ENCODE measurements at regions of chr9 and their contacts with region 1.

Region 1: DNA sequence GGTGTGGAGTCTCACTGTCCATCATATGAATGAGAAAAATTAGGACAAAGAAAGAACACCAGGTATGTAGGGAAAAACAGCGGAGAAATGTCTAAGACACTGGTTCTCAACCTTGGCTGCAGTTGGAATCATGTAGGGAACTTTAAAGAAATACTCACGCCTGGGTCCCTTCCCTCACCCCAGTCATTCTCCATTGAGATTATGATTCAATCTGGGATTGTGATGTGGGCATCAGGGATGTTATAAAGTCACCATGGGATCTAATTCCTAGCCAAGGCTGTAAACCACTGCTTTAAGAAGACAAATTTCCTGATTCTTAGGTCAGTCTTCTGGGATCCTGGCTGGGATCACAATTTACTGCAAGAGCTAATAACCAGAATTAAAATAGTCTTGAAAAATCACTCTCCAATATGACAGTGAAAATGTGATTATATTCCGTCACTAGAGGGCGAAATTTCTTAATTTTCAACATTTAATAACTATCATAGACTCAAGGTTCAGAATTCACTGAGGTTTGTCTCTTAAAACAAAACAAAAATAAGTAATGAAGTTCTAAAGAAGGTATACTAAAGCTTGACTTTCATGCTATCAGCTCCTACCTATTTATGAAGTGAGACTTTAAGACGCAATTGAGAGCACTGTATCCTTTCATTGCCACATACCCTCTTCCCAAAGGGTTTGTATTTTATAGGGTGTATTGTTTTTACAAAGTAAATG is 60.5 kb downstream of the GLDC start:
- DNase-seq: no peak

Region 2: DNA sequence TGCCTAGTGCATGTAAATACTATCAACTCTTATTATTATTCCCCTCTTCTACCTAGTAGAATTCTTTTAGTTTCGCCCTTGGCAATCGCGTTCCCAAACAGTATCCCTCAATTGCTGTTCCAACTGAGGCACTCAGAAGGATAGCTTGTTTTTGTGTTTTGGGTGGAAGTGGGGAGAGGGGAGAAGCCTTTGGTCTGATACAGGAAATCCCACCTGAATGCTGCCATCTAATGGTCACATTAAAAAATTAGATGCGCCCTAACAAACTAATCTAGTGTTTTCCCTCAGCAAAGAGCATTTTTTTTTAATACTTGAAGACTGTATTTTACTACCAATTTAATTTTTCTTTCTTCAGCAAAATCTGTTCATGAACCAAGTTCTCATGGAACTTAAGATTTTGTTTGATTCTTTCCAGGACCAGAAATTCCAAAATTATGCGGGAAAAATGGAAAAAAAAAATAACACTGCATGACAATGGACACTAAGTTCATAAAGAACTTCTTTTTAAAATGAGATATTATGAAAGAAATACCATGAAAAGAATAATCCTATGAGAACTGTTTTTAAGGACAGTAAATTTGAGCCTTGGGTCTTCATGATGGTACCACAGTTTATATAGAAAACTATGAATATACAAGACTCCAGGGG is 82.7 kb after region 1 on chr9:
- intact Hi-C with region 1: loop called (anchors 5 kb)
- DNase-seq: peak in 12 of 42 donors; percentile 9 to 63 (median 27)